ENCODE measurements at regions of chr3 and their contacts with region 1.

Region 1: DNA sequence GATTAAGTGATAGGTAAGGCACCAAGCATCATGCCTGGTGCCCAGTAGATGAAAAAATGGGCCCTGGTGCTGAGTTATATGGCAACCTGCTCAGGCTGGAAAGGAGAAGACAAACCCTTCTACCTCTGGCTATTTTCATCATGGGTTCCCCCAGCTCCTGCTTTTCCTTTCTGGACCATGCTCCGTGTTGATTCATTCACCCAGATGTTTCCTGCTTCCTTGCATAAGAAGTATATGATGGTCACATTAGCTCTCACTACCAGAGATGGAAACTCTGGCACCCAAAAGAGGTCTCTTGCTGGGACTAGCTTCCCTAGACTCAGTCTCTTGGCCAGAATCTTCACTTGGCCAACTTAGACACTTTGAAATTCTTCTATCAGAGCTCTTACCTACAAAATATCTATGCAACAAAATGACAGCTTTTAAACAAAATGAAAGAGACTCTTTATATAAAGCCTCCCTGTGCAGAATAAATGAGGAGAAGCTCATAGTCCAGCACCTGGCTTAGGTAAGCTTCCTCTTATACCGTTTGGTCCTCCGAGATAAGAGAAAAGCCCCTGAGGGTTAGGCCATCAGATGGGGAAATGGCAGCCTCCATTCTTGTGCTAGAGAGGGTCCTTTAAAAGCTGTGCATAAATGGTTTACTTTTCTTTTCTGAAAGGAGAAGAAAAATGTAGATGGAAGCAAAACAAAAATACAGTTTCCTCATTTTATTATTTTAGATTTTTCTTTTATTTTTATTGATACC is 46.8 kb upstream of the MCF2L2 start:
- DNase-seq: no peak
- ATAC-seq: no peak
- H3K4me3 ChIP-seq: no peak overlapping the region
- H3K27ac ChIP-seq: no peak overlapping the region
- H3K4me1 ChIP-seq: no peaks in the 10 kb centered on the region
- H3K27me3 ChIP-seq: no peaks in the 10 kb centered on the region

Region 2: GRCh38 chr3:183490670-183491069 is 15.5 kb after region 1 on chr3:
- intact Hi-C with region 1: loop called in 1 of 2 experiments (anchors 1 kb)
- DNase-seq: no peak
- ATAC-seq: no peak
- H3K4me3 ChIP-seq: no peak overlapping the region
- H3K27ac ChIP-seq: no peak overlapping the region
- H3K4me1 ChIP-seq: no peaks in the 10 kb centered on the region
- H3K27me3 ChIP-seq: no peaks in the 10 kb centered on the region

Measured in aorta (tissue), 5 donors.